Activated CD4-positive, alpha-beta T cell treated with anti-CD3 and anti-CD28 coated beads for 36 hours (primary cell): ENCODE measurements at regions of chr5 and their contacts with region 1.

Region 1: DNA sequence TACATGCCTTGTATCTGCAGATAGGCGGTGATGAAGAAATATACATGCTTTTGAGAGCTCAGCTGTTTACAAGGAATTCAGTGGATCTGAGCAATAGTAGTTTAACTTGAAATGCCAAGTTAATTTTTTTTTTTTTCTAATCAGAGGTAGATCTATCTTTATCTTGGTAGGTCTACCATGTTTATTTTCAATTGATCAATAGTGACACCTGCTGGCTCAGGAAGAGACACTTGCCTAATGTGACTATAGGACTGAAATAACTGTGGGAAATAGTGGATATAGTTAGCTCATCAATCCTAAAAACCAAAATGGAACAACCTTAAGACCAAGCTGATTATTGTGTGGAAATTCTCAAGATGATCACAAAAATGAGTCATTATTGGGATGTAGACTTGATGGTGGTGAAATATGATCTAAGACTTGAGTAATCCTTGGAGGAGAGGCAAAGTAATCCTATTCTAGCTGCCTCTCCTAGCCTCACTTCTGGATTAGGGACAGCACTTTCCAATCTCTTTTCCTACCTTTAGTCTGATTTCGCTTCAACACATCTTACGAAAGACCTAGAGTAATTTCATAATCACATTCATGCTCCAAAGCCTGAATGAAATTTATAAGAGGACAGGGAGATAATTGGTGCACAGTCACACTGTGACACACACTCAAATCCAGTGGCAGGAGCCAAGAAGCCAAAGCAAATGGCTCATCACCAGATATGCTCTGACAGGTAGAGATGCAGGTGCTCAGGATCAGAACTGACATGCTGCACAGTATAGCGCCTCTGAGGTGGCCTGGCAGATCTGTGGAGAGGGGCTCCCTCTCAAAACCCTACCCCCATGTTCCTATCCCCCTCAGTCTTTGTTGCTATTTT is 156.3 kb downstream of the HMHB1 start:
- DNase-seq: peak; percentile 8
- ATAC-seq: peak; percentile 80
- H3K4me3 Mint-ChIP-seq: no peak overlapping the region
- H3K27ac Mint-ChIP-seq: no peak overlapping the region
- H3K4me1 Mint-ChIP-seq: no peaks in the 10 kb centered on the region
- H3K27me3 Mint-ChIP-seq: no peaks in the 10 kb centered on the region

Region 2: GRCh38 chr5:142713121-142713706 is 1255.0 kb before region 1 on chr5:
- CTCF ChIA-PET with region 1: no interaction called
- POLR2A ChIA-PET with region 1: no interaction called
- intact Hi-C with region 1: loop called (anchors 1 to 10 kb)
- DNase-seq: peak; percentile 92
- ATAC-seq: peak; percentile 95
- H3K4me3 Mint-ChIP-seq: peak overlapping the region; percentile 64
- H3K27ac Mint-ChIP-seq: no peak overlapping the region
- H3K4me1 Mint-ChIP-seq: peaks cover 3% of the 10 kb centered on the region
- H3K27me3 Mint-ChIP-seq: no peaks in the 10 kb centered on the region

Region 3: DNA sequence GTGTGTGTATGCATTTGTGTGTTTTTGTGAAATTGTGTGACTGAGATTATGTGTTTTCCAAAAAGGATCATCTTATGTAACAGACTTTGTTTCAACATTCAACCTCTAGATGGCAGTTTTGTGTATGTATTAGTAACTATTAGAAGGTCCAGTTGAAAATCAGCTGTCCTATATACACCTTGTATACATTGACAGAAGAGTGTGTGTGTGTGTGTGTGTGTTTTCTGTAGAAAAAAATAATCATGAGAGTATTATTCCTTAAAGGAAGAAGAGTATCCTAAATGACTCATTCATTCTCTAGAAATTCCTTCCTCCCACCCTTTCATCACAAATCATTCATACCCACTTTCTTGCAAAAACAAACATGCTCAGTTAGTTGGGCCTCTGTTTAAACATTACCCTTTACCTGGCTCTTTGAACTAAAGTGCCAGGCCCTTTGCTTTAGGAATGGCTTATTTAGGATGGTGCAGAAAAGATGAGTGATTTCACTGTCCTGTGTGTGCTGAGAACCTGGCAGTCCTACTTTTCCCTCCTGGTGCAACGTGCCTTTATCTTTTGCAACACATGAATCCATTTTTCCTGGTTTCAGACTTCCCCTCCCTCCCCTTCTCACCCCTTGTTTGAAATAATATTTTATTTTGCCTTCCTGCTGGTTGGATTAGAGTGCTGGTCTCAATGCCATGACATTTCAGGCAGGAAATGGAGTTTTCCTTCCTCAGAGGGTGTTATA is 1045.9 kb before region 1 on chr5:
- CTCF ChIA-PET with region 1: interaction called, 3 read pairs
- POLR2A ChIA-PET with region 1: no interaction called
- intact Hi-C with region 1: loop called in 1 of 2 experiments (anchors 1 kb)
- DNase-seq: no peak
- ATAC-seq: no peak
- H3K4me3 Mint-ChIP-seq: no peak overlapping the region
- H3K27ac Mint-ChIP-seq: no peak overlapping the region
- H3K4me1 Mint-ChIP-seq: peaks cover 23% of the 10 kb centered on the region
- H3K27me3 Mint-ChIP-seq: no peaks in the 10 kb centered on the region

Region 4: DNA sequence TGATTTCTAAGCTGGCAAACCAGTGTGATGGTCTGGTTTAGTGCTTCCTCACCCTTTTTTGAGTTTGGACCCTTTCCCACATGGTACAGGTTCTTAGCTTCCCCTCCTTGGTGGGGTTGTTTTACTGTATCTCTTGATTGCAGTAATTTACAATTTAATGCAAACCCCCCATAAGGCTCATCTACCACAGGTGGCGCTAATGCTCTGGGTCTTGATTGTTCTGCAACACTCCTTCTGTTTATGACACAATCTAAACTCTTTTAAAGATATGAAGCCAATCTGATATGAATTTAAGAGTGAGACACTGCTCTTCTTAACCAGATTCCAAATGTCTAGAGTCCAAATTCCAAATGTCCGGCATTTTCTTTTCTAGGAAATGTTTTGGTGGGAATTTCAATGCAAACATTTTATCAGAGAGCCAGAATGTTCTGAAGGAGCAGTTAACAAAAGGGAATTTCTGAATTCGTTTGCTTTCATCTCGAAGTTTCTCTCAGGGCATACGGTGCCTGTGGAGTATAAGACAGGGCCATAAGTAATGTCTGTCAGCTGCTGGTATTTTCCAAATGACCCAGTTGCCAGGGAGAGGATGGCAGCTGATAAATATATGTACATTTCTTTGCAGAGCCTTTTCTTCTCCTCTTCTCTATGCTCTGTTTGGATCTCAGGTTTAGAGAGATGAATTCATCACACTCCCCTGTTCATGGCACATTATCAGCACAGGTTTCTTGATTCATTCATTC is 951.3 kb before region 1 on chr5:
- CTCF ChIA-PET with region 1: no interaction called
- POLR2A ChIA-PET with region 1: no interaction called
- intact Hi-C with region 1: loop called (anchors 2 to 10 kb)
- DNase-seq: peak; percentile 75
- ATAC-seq: peak; percentile 31
- H3K4me3 Mint-ChIP-seq: no peak overlapping the region
- H3K27ac Mint-ChIP-seq: no peak overlapping the region
- H3K4me1 Mint-ChIP-seq: peaks cover 15% of the 10 kb centered on the region
- H3K27me3 Mint-ChIP-seq: no peaks in the 10 kb centered on the region

Region 5: DNA sequence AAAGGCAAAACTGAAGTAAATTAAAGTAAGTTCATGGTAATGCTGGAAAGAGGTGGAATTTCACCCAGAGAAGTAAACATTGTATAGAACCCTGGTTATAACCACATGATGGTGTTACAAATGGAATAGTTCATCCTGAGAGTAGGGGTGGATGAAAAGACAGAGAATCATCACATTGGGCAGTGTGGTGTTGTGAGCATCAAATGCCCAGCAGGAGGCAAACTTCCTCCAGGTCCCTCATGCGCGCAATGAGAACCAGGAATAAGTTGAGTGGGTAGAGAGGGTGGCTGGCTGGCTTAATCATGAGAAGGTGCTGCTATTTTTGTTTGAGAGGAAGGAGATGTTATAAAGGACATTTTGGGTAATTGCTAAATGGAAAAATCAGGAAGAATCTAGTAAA is 319.5 kb before region 1 on chr5:
- CTCF ChIA-PET with region 1: no interaction called
- POLR2A ChIA-PET with region 1: no interaction called
- intact Hi-C with region 1: loop called in 1 of 2 experiments (anchors 10 kb)
- DNase-seq: peak; percentile 26
- ATAC-seq: no peak
- H3K4me3 Mint-ChIP-seq: no peak overlapping the region
- H3K27ac Mint-ChIP-seq: no peak overlapping the region
- H3K4me1 Mint-ChIP-seq: peaks cover 17% of the 10 kb centered on the region
- H3K27me3 Mint-ChIP-seq: no peaks in the 10 kb centered on the region

Region 6: DNA sequence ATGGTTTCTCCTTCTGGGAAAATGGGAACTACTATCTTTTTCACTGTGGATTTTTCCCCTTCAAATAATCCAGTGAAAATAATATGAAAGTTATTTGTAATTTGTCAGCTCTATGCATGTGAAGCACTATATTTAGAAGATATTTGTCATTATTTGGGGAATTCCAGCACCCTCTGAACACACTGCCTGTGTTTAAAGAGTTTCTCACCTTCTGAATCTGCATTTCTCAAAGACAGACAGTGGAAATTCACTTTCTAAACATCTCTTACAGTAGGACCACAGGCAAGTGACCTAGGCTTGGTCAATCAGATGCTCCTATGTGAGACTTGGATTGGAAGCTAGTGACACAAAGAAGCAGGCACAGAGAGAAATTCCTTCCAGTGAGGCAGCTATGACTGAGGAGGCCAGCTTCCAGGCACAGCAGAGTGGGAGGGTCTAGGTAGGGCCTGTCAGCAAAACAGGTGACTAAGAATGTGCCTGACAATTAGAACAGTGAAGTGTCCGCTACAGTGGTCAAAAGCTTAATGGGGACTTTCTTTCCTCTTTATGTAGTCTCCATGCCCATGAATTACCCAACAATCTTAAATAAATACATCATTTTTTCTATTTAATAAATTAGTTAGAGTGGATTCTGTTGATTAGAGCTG is 10.9 kb after region 1 on chr5:
- CTCF ChIA-PET with region 1: interaction called, 12 read pairs
- POLR2A ChIA-PET with region 1: no interaction called
- intact Hi-C with region 1: no loop called
- DNase-seq: no peak
- ATAC-seq: no peak
- H3K4me3 Mint-ChIP-seq: no peak overlapping the region
- H3K27ac Mint-ChIP-seq: no peak overlapping the region
- H3K4me1 Mint-ChIP-seq: no peaks in the 10 kb centered on the region
- H3K27me3 Mint-ChIP-seq: peaks cover 2% of the 10 kb centered on the region